ENCODE measurements at regions of chr3 and their contacts with region 1.

Region 1: DNA sequence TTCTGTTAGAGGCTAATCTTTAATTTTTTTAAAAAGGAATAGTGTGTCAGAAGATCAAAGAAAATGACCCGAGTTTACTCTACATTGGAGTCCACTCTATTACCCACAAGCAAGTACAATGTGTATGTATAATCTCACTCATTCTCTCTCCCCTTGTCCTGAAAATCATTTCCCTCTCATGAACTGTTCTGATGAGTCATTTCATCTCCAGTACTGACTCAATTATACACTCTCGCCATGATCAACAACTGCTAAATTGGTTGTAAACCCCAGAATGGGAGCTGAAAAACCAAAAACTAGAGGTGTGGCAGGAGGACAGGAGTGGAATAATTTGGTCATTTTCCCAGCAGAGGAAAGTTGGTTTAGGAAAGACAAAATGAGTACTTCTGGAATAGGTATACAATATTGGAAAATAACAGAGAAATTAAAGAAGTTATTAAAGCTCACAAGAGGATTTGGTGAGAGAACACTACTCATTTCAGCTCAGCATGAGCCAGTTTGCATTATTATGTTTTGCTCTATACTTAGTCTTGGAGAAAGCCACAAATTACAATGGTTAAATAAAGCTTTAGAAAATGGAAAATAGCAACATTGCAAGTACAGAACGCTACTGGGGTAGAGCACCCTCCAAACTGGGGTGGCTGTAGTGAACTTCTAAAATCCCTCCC is 144.3 kb upstream of the PFN2 start:
- DNase-seq: peak; percentile 69
- ATAC-seq: peak; percentile 95
- H3K4me3 ChIP-seq: peak overlapping the region; percentile 19; the same call in 1 of the 2 replicates
- H3K27ac ChIP-seq: peak overlapping the region; percentile 43; the same call in 1 of the 2 replicates
- H3K4me1 ChIP-seq: peaks cover 27% of the 10 kb centered on the region
- H3K27me3 ChIP-seq: no peaks in the 10 kb centered on the region
- CTCF ChIP-seq: no peak
- EP300 ChIP-seq: peak; percentile 70 to 89; a peak in 3 of 4 replicates
- POLR2A ChIP-seq: no peak
- RAD21 ChIP-seq: no peak

Region 2: DNA sequence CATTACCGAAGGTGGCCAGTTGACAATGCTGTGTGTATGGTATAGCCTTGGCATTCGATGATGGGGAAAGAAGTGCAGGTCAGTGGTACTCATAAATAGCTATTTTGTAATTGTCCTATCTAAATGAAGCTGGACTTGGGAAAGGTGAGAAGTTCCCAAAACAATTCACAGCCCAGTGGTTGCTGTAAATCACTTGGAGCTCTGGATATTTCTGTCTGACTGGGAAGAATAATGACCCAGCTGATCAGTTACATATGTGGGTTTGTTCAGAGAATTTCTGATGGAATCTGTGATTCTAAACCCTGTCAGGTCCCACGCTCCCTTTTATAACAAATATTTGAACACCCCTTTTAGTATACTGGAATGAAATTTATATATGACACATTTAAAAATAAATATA is 10.4 kb before region 1 on chr3:
- CTCF ChIA-PET with region 1: interaction called, 5 read pairs
- POLR2A ChIA-PET with region 1: interaction called, 3 read pairs
- RAD21 ChIA-PET with region 1: interaction called, 6 read pairs
- SMC1A ChIA-PET with region 1: interaction called, 10 read pairs
- in situ Hi-C with region 1: no loop called
- intact Hi-C with region 1: no loop called
- DNase-seq: no peak
- ATAC-seq: no peak
- H3K4me3 ChIP-seq: no peak overlapping the region
- H3K27ac ChIP-seq: no peak overlapping the region
- H3K4me1 ChIP-seq: no peaks in the 10 kb centered on the region
- H3K27me3 ChIP-seq: no peaks in the 10 kb centered on the region
- CTCF ChIP-seq: no peak
- EP300 ChIP-seq: no peak
- POLR2A ChIP-seq: no peak
- RAD21 ChIP-seq: no peak

Measured in GM12878 (cell line).